Thyroid gland (tissue), 4 donors: ENCODE measurements at regions of chr3 and their contacts with region 1.

Region 1: GRCh38 chr3:27312044-27312668 is 57.0 kb downstream of the NEK10 start:
- DNase-seq: no peak
- H3K4me3 ChIP-seq: no peak overlapping the region
- H3K27ac ChIP-seq: no peak overlapping the region
- H3K4me1 ChIP-seq: no peaks in the 10 kb centered on the region
- H3K27me3 ChIP-seq: no peaks in the 10 kb centered on the region
- CTCF ChIP-seq: peak; percentile 44 to 79 (median 66)
- POLR2A ChIP-seq: no peak

Region 2: GRCh38 chr3:27171113-27171512 is 141.0 kb before region 1 on chr3:
- intact Hi-C with region 1: no loop called
- DNase-seq: no peak
- H3K4me3 ChIP-seq: no peak overlapping the region
- H3K27ac ChIP-seq: no peak overlapping the region
- H3K4me1 ChIP-seq: no peaks in the 10 kb centered on the region
- H3K27me3 ChIP-seq: no peaks in the 10 kb centered on the region
- CTCF ChIP-seq: no peak
- POLR2A ChIP-seq: no peak

Region 3: GRCh38 chr3:27578032-27578431 is 265.9 kb after region 1 on chr3:
- intact Hi-C with region 1: no loop called
- DNase-seq: no peak
- H3K4me3 ChIP-seq: no peak overlapping the region
- H3K27ac ChIP-seq: peak overlapping the region in 1 of 3 donors; percentile 33
- H3K4me1 ChIP-seq: no peaks in the 10 kb centered on the region
- H3K27me3 ChIP-seq: no peaks in the 10 kb centered on the region
- CTCF ChIP-seq: no peak
- POLR2A ChIP-seq: no peak

Region 4: GRCh38 chr3:27681245-27681748 is 369.1 kb after region 1 on chr3:
- intact Hi-C with region 1: loop called (anchors 5 kb)
- DNase-seq: peak in 1 of 2 donors; percentile 10
- H3K4me3 ChIP-seq: no peak overlapping the region
- H3K27ac ChIP-seq: no peak overlapping the region
- H3K4me1 ChIP-seq: peaks cover 0 to 3% of the 10 kb centered on the region in 2 donors
- H3K27me3 ChIP-seq: no peaks in the 10 kb centered on the region
- CTCF ChIP-seq: peak in 5 of 6 experiments; percentile 43 to 92 (median 57)
- POLR2A ChIP-seq: no peak